Heart right ventricle (tissue), 16 donors: ENCODE measurements at regions of chr11 and their contacts with region 1.

Region 1: DNA sequence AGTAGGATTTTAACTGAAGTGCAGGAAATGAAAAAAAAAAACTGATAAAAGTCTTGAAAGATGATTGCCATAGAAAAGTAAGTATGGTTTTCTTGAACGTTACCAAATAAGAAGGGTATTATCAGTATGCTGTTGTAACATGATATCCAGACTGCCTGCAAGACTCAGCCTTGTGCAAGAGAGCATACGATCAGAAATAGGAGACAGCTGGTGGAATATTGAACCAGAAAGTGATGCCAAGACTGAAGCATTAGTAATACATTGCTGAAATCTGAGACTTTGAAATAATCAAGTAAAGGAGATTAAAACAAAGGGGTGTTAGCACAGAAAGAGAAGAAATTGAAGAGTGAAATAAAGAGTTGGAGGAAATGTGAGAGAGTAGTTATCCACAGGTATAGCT is 452.7 kb upstream of the CNTN5 start:
- DNase-seq: no peak
- ATAC-seq: no peak
- H3K4me3 ChIP-seq: no peak overlapping the region
- H3K27ac ChIP-seq: no peak overlapping the region
- H3K4me1 ChIP-seq: no peaks in the 10 kb centered on the region
- H3K27me3 ChIP-seq: no peaks in the 10 kb centered on the region
- CTCF ChIP-seq: no peak

Region 2: GRCh38 chr11:98507208-98507607 is 60.8 kb before region 1 on chr11:
- intact Hi-C with region 1: loop called in 1 of 10 experiments (anchors 10 kb)
- DNase-seq: no peak
- ATAC-seq: no peak
- H3K4me3 ChIP-seq: no peak overlapping the region
- H3K27ac ChIP-seq: no peak overlapping the region
- H3K4me1 ChIP-seq: no peaks in the 10 kb centered on the region
- H3K27me3 ChIP-seq: no peaks in the 10 kb centered on the region
- CTCF ChIP-seq: no peak